ENCODE measurements at regions of chr17 and their contacts with region 1.

Region 1: DNA sequence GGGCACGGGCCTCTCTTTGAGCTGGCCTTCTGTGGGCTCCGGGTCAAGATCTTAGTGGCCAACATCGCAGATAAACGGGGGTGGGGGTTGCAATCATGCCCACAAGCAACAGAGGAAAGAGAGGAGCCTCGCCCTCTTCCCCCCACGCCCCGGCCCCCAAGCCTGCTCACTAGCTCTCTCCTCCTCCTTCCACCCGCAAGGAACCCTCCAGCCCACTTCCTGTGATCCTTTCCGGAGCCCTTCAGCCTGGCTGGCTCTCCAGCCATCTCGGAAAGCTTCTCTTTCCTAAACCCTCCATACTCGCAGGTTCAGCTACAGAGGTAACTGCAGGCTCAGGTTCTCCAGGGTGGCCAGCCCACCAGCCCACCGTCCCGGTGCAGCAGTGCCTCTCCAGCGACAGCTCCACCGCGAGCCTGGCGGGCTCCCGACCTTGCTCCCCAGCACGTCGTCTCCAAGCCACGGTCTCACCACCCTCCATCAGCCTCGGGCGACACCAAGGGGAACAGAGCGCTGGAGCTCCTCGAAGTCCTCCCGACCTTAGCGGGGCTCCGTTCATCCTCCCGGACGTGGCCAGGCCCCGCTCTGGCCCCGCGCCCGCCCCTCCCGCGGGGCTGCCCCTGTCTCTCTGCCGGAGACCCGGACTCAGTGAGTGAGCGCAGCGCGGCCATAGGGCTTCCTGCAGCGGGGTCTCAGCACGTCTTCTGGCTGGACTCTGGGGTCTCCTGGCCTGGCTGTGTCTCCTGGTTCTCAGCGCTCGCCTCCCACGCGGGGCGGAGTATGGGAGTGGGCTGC is 12.9 kb upstream of the ODF4 start:
- DNase-seq: peak; percentile 49 to 71 (median 62)
- H3K4me3 ChIP-seq: peak overlapping the region; percentile 46 to 81 (median 69)
- H3K27ac ChIP-seq: peak overlapping the region in 1 of 2 experiments; percentile 6
- H3K4me1 ChIP-seq: peaks cover 0 to 32% (median 28%) of the 10 kb centered on the region in 4 experiments
- H3K27me3 ChIP-seq: no peaks in the 10 kb centered on the region

Region 2: GRCh38 chr17:8300627-8301242 is 26.0 kb before region 1 on chr17:
- CTCF ChIA-PET with region 1: interaction called, 12 read pairs
- POLR2A ChIA-PET with region 1: no interaction called
- DNase-seq: peak; percentile 64 to 83 (median 81)
- H3K4me3 ChIP-seq: no peak overlapping the region
- H3K27ac ChIP-seq: no peak overlapping the region
- H3K4me1 ChIP-seq: peaks cover 0 to 3% (median 2%) of the 10 kb centered on the region in 4 experiments
- H3K27me3 ChIP-seq: no peaks in the 10 kb centered on the region

Region 3: DNA sequence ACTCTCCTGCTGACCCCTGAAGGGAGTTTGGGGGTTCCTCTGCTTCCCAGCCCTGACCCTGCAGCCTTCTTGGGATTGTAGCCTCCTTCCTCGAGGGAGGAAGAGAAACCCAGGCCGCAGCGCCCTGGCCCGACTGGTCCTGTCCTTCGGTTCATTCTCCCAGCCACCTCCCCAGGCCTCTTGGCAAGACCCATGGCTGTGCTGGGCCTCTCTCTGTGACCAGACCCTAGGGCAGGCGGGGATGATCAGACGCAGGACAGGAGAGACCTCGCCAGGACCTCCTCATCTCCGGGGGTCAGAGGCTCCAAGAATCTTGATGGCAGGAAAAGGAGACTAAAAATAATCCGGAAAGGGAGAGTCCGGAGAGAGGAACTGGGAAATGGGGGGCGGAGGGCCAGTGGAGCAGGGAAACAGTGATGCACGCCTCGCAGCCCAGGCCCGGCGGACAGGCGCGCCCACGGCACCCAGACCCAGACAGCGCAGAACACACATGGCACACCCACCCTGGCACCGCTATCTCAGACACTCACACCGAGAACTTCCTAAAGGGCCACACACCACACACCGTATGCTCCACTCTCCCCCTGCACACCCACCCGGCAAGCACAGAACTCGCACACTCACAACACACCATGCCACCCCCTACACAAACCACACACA is 15.4 kb before region 1 on chr17:
- CTCF ChIA-PET with region 1: no interaction called
- POLR2A ChIA-PET with region 1: no interaction called
- DNase-seq: no peak
- H3K4me3 ChIP-seq: no peak overlapping the region
- H3K27ac ChIP-seq: no peak overlapping the region
- H3K4me1 ChIP-seq: peaks cover 0 to 3% (median 0%) of the 10 kb centered on the region in 4 experiments
- H3K27me3 ChIP-seq: peaks cover 0 to 1% (median 0%) of the 10 kb centered on the region in 5 experiments

Region 4: GRCh38 chr17:8337802-8338752 is 11.4 kb after region 1 on chr17:
- CTCF ChIA-PET with region 1: interaction called, 36 read pairs
- POLR2A ChIA-PET with region 1: interaction called, 3 read pairs
- DNase-seq: peak; percentile 81 to 96 (median 94)
- H3K4me3 ChIP-seq: peak overlapping the region; percentile 5 to 60 (median 45)
- H3K27ac ChIP-seq: peak overlapping the region in 1 of 2 experiments; percentile 36
- H3K4me1 ChIP-seq: peaks cover 7 to 19% (median 15%) of the 10 kb centered on the region in 4 experiments
- H3K27me3 ChIP-seq: no peaks in the 10 kb centered on the region

Region 5: GRCh38 chr17:8376271-8377067 is 49.8 kb after region 1 on chr17 and contains the start of gene KRABD2:
- CTCF ChIA-PET with region 1: interaction called, 12 read pairs
- POLR2A ChIA-PET with region 1: interaction called, 6 read pairs
- DNase-seq: peak; percentile 88 to 95 (median 95)
- H3K4me3 ChIP-seq: peak within 1 kb of the TSS; percentile 59 to 99 (median 88)
- H3K27ac ChIP-seq: peak within 1 kb of the TSS; percentile 62 to 87
- H3K4me1 ChIP-seq: peaks cover 0 to 36% (median 31%) of the 10 kb centered on the region in 4 experiments
- H3K27me3 ChIP-seq: no peaks in the 10 kb centered on the region